Endothelial cell of umbilical vein (primary cell): ENCODE measurements at regions of chr2 and their contacts with region 1.

Region 1: DNA sequence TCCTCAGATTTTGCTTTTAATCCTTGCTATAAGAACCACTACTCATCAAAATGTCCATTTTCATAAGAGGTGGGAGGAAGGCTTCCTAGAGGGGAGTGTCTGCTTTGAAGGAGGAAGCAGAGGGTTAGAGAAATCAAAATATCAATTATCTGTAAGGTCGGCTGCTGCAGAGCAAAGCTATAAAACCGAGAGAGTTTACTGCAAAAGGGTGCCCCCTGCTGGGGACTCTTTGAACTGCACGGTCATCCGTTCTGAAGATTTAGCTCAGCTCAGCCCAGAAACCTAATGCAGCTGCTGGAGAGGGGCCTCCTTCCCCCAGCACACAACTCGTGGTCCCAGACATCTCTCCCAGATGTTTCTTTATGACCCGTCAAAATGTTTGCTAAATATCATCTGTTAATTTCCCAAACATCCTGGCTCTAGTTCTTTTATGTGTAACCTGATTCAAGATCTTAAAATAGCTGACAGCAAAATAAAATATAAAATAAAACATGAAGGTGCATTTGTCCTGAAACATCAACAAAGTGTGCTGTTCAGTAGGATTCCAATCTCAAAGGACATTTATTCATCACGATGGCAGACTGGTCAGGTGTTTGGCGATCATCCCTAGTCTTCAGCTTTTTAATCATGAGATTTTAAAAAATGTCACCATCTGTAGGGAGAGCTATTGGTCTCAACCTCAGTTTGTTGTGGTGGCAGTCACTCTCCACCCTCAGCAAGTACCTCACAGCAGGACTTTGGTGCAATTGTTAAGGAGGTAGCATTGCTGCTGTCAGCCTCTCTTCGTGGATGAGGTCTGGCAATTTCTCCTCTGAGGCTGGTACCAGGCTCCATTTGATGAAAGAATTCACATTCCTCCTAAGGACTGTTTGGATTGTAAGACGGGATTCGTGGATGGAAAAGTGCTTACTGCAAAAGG is 185.9 kb downstream of the MTX2 start:
- DNase-seq: peak; percentile 87
- H3K4me3 ChIP-seq: no peak overlapping the region
- H3K27ac ChIP-seq: no peak overlapping the region
- H3K4me1 ChIP-seq: peaks cover 3% of the 10 kb centered on the region
- H3K27me3 ChIP-seq: no peaks in the 10 kb centered on the region
- CTCF ChIP-seq: peak; percentile 78 to 82
- POLR2A ChIP-seq: no peak

Region 2: GRCh38 chr2:176126929-176127773 is 328.0 kb before region 1 on chr2:
- CTCF ChIA-PET with region 1: interaction called, 109 read pairs
- POLR2A ChIA-PET with region 1: no interaction called
- dilution Hi-C with region 1: no loop called
- intact Hi-C with region 1: loop called (anchors 1 kb)
- DNase-seq: peak; percentile 68
- H3K4me3 ChIP-seq: peak overlapping the region in 2 of 3 experiments; percentile 48 to 67
- H3K27ac ChIP-seq: no peak overlapping the region
- H3K4me1 ChIP-seq: peaks cover 33% of the 10 kb centered on the region
- H3K27me3 ChIP-seq: peaks cover 5 to 6% of the 10 kb centered on the region in 2 experiments
- CTCF ChIP-seq: peak; percentile 61 to 66
- POLR2A ChIP-seq: no peak

Region 3: GRCh38 chr2:176161819-176162626 is 293.1 kb before region 1 on chr2:
- CTCF ChIA-PET with region 1: interaction called, 18 read pairs
- POLR2A ChIA-PET with region 1: no interaction called
- dilution Hi-C with region 1: no loop called
- intact Hi-C with region 1: no loop called
- DNase-seq: no peak
- H3K4me3 ChIP-seq: no peak overlapping the region
- H3K27ac ChIP-seq: no peak overlapping the region
- H3K4me1 ChIP-seq: peaks cover 3% of the 10 kb centered on the region
- H3K27me3 ChIP-seq: peaks cover 5 to 15% of the 10 kb centered on the region in 2 experiments
- CTCF ChIP-seq: no peak
- POLR2A ChIP-seq: no peak

Region 4: GRCh38 chr2:176234156-176234555 is 221.0 kb before region 1 on chr2:
- CTCF ChIA-PET with region 1: interaction called, 13 read pairs
- POLR2A ChIA-PET with region 1: no interaction called
- dilution Hi-C with region 1: no loop called
- intact Hi-C with region 1: no loop called
- DNase-seq: peak; percentile 81
- H3K4me3 ChIP-seq: no peak overlapping the region
- H3K27ac ChIP-seq: peak overlapping the region; percentile 72
- H3K4me1 ChIP-seq: peaks cover 16% of the 10 kb centered on the region
- H3K27me3 ChIP-seq: no peaks in the 10 kb centered on the region
- CTCF ChIP-seq: no peak
- POLR2A ChIP-seq: no peak

Region 5: GRCh38 chr2:176291809-176292283 is 163.3 kb before region 1 on chr2:
- CTCF ChIA-PET with region 1: interaction called, 4 read pairs
- POLR2A ChIA-PET with region 1: no interaction called
- dilution Hi-C with region 1: no loop called
- intact Hi-C with region 1: loop called (anchors 1 kb)
- DNase-seq: no peak
- H3K4me3 ChIP-seq: no peak overlapping the region
- H3K27ac ChIP-seq: no peak overlapping the region
- H3K4me1 ChIP-seq: no peaks in the 10 kb centered on the region
- H3K27me3 ChIP-seq: no peaks in the 10 kb centered on the region
- CTCF ChIP-seq: no peak
- POLR2A ChIP-seq: no peak

Region 6: GRCh38 chr2:176432434-176432833 is 22.7 kb before region 1 on chr2:
- CTCF ChIA-PET with region 1: interaction called, 11 read pairs
- POLR2A ChIA-PET with region 1: no interaction called
- dilution Hi-C with region 1: no loop called
- intact Hi-C with region 1: no loop called
- DNase-seq: peak; percentile 12
- H3K4me3 ChIP-seq: no peak overlapping the region
- H3K27ac ChIP-seq: no peak overlapping the region
- H3K4me1 ChIP-seq: no peaks in the 10 kb centered on the region
- H3K27me3 ChIP-seq: no peaks in the 10 kb centered on the region
- CTCF ChIP-seq: no peak
- POLR2A ChIP-seq: no peak

Region 7: GRCh38 chr2:176638167-176639015 is 183.2 kb after region 1 on chr2:
- CTCF ChIA-PET with region 1: interaction called, 74 read pairs
- POLR2A ChIA-PET with region 1: no interaction called
- dilution Hi-C with region 1: no loop called
- intact Hi-C with region 1: loop called (anchors 1 kb)
- DNase-seq: peak; percentile 74
- H3K4me3 ChIP-seq: peak overlapping the region; percentile 9 to 59 (median 55)
- H3K27ac ChIP-seq: peak overlapping the region; percentile 79
- H3K4me1 ChIP-seq: peaks cover 25% of the 10 kb centered on the region
- H3K27me3 ChIP-seq: no peaks in the 10 kb centered on the region
- CTCF ChIP-seq: peak; percentile 63 to 83
- POLR2A ChIP-seq: no peak